Activated CD4-positive, alpha-beta T cell treated with anti-CD3 and anti-CD28 coated beads, Interleukin-2, amount 10 ng/mL, durations not matched to agents 24 days and 14 days (primary cell): ENCODE measurements at regions of chr20 and their contacts with region 1.

Region 1: GRCh38 chr20:56247948-56248782 is at the start of gene MC3R:
- DNase-seq: peak; percentile 80
- H3K4me3 Mint-ChIP-seq: no peak within 1 kb of the TSS
- H3K27ac Mint-ChIP-seq: no peak within 1 kb of the TSS
- H3K4me1 Mint-ChIP-seq: no peaks in the 10 kb centered on the region
- H3K27me3 Mint-ChIP-seq: peaks cover 9% of the 10 kb centered on the region
- total RNA-seq, gene MC3R: not detected in 2 replicates

Region 2: GRCh38 chr20:56343861-56344381 is 95.8 kb after region 1 on chr20:
- intact Hi-C with region 1: loop called (anchors 2 kb)
- DNase-seq: peak; percentile 83
- H3K4me3 Mint-ChIP-seq: peak overlapping the region; percentile 18
- H3K27ac Mint-ChIP-seq: no peak overlapping the region
- H3K4me1 Mint-ChIP-seq: peaks cover 2% of the 10 kb centered on the region
- H3K27me3 Mint-ChIP-seq: peaks cover 75% of the 10 kb centered on the region

Region 3: GRCh38 chr20:56582542-56582941 is 334.4 kb after region 1 on chr20:
- intact Hi-C with region 1: loop called (anchors 5 kb)
- DNase-seq: no peak
- H3K4me3 Mint-ChIP-seq: no peak overlapping the region
- H3K27ac Mint-ChIP-seq: no peak overlapping the region
- H3K4me1 Mint-ChIP-seq: no peaks in the 10 kb centered on the region
- H3K27me3 Mint-ChIP-seq: peaks cover 6% of the 10 kb centered on the region